Colonic mucosa (tissue), 4 donors: ENCODE measurements at regions of chr5 and their contacts with region 1.

Region 1: DNA sequence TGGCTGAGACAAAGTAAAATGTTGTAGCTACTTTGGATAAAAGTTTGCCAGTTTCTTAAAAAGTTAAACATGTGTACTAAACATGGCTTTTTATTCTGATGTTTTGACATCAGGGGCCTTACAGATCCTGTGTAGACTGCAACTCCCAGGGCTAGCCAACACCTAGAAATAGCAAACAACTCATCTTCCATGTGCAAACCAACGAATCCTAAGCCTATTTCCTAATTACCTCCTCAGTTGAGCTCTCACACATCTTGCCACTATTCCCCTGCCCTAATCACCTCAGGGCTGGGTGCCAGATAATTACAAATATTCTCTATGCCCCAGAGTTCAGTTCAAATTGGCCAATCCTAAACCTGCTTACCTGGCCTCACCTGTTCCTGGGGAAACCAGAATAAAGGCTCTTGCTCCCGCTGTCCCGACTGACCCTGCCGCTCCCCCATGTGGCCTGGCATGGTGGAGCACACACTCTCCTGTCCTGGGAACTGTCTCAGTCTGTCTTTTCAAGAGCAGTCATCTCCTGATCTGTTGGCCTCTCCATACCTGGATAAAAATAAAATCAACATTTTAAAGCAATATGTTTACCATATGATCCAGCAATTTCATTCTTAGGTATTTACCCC is 37.1 kb upstream of the FAM169A start:
- DNase-seq: peak; percentile 62
- H3K4me3 ChIP-seq: no peak overlapping the region
- H3K27ac ChIP-seq: no peak overlapping the region
- H3K4me1 ChIP-seq: no peaks in the 10 kb centered on the region
- H3K27me3 ChIP-seq: no peaks in the 10 kb centered on the region
- CTCF ChIP-seq: peak; percentile 52

Region 2: DNA sequence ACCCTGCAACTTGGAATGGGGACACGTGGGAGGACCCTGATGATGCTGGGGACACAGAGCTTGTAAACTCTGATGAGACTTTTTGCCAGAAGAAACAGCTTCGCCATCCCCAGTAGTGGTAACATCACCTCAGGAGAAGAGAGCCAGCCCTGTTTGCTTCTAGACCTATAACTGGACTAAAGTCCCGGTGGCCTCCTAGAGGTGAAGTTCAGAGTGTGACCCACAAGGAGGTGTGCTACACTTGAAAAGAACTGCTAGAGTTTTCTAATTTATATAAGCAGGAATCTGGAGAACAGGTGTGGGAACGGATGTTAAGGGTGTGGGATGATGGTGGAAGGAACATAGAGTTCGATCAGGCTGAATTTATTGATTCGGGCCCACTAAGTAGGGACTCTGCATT is 116.4 kb before region 1 on chr5:
- intact Hi-C with region 1: loop called (anchors 5 kb)
- DNase-seq: no peak
- H3K4me3 ChIP-seq: no peak overlapping the region
- H3K27ac ChIP-seq: no peak overlapping the region
- H3K4me1 ChIP-seq: no peaks in the 10 kb centered on the region
- H3K27me3 ChIP-seq: no peaks in the 10 kb centered on the region
- CTCF ChIP-seq: peak; percentile 11

Region 3: DNA sequence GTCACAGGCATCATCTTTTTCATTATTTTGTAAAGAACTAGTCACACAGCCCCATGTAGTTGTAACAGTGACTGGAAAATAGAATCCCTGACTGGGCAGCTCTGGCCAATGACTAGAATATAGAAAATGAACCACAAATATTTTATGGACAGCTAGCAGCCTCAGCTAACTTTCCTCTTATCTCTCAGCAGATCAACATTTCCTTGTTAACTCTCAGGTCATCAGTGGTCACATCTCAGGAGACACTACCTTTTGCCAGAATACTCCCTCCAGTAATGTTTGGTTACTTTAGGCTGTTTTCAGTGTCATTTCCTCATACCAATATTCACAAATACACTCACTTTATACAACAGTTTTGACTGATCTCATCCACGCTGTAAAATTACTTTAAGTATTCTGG is 81.0 kb before region 1 on chr5:
- intact Hi-C with region 1: no loop called
- DNase-seq: no peak
- H3K4me3 ChIP-seq: no peak overlapping the region
- H3K27ac ChIP-seq: no peak overlapping the region
- H3K4me1 ChIP-seq: no peaks in the 10 kb centered on the region
- H3K27me3 ChIP-seq: no peaks in the 10 kb centered on the region
- CTCF ChIP-seq: no peak

Region 4: GRCh38 chr5:75214928-75215327 is 311.7 kb after region 1 on chr5:
- intact Hi-C with region 1: no loop called
- DNase-seq: peak; percentile 36
- H3K4me3 ChIP-seq: no peak overlapping the region
- H3K27ac ChIP-seq: no peak overlapping the region
- H3K4me1 ChIP-seq: no peaks in the 10 kb centered on the region
- H3K27me3 ChIP-seq: no peaks in the 10 kb centered on the region
- CTCF ChIP-seq: no peak